ENCODE measurements at regions of chr14 and their contacts with region 1.

Region 1: DNA sequence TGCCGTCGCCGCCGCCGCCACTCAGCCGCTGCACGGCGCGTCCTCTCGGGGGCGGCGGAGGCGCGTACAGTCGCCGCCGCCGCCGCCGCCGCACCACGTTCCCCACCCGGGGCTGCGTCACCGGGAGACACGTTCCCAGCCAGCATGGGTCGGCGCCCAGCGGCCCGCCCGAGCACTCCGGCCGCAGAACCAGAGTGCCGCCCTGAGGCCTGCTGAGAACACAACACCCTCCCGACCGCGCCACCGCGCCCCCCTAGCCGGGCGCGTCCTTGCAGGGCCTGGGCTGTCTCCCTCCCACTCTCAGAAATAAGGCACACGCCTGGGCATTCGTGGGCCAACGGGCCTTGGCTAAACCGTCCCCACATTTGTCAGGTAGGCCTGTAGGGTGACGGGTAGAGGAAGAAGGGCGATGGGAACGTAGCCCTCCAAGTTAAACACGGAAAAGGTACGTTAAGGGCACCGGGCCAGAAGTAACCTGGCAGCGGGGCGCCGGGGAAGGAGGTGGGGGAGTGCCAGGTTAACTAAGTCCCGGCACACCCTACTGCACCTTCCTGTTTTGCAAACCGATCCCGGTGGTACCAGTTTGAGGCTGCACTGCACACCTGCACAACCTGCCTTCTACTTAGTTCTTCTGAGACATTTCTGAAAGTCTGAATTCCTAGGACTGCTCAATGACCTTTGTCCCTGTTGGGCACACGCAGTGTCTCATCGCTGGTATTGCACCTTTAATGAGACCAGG is at the start of gene MAP4K5:
- DNase-seq: peak; percentile 93
- ATAC-seq: peak; percentile 99
- total RNA-seq, gene MAP4K5: 17.6 to 25.3 TPM

Region 2: DNA sequence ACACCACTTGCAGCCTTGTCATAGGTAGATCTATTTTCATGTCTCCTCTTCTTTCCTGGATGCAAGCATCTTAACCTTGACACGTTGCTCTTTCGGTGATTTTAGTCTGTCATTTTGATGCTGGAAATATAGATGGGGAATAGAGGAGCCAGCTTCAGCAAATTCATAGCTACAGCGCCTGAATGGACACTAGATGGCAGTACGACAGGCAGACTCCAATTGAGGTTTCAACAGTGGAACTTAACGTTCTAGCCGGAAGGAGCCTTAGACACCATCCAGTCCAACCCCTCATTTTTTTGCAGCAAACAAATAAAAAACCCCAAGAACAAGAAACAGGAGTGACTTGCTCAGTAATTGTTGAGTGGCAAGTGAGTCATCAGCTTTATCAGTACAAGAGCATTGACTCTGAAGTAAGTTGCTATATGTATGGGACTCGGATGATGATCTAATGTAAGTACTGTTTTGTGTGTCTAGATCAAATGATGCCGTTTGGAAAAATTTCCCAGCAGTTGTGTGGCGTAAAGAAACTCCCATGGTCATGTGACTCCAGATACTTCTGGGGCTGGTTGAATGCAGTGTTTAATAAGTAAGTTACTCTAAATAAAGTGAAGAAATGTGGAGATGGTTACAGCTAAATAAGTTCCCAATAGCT is 211.5 kb before region 1 on chr14:
- intact Hi-C with region 1: loop called (anchors 1 to 5 kb)
- DNase-seq: peak; percentile 50
- ATAC-seq: peak; percentile 95 to 96

Region 3: GRCh38 chr14:50335389-50335788 is 197.3 kb before region 1 on chr14:
- intact Hi-C with region 1: loop called in 1 of 2 experiments (anchors 5 kb)
- DNase-seq: peak; percentile 58
- ATAC-seq: peak; percentile 62 to 79